ENCODE measurements at regions of chr3 and their contacts with region 1.

Region 1: DNA sequence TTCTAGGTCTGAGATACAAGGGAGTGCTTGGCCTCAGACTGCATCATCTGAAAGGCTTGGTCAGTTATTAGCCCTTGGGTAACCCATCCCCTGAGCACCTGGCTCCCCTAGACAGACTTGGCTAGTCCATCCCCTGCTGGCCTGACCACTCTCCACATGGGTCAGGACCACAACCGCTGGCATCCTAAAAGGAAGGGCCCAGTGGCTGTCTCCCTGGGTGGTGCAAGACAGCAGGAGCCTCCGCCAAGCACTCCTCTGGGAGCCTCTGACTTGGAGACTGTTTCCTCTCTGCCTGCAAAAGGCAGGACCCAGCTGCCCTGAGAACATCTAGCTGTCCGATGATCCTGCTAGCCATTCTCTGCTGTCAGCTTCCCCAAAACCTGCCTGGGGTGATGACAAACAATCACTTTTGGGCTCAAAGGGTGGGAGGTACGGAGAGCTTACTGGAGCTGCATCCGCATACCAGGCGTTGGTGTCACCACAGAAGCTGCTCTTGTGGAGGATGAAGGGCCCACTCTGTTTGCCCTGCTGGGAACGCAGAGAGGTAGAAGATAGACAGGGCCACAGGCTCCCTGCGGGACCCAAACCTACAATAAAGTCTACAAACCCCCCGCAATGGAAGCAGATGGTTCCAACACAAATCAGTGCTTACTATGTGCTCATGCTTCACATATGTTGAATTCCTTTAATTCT is 108.0 kb upstream of the PRR20G start:
- DNase-seq: no peak
- ATAC-seq: peak; percentile 54
- H3K4me3 Mint-ChIP-seq: peak overlapping the region; percentile 6; the same call in 1 of the 2 replicates
- H3K27ac Mint-ChIP-seq: no peak overlapping the region; the same call in 1 of the 2 replicates
- H3K4me1 Mint-ChIP-seq: peaks cover 28% of the 10 kb centered on the region
- H3K27me3 Mint-ChIP-seq: no peaks in the 10 kb centered on the region
- CTCF ChIP-seq: no peak

Region 2: DNA sequence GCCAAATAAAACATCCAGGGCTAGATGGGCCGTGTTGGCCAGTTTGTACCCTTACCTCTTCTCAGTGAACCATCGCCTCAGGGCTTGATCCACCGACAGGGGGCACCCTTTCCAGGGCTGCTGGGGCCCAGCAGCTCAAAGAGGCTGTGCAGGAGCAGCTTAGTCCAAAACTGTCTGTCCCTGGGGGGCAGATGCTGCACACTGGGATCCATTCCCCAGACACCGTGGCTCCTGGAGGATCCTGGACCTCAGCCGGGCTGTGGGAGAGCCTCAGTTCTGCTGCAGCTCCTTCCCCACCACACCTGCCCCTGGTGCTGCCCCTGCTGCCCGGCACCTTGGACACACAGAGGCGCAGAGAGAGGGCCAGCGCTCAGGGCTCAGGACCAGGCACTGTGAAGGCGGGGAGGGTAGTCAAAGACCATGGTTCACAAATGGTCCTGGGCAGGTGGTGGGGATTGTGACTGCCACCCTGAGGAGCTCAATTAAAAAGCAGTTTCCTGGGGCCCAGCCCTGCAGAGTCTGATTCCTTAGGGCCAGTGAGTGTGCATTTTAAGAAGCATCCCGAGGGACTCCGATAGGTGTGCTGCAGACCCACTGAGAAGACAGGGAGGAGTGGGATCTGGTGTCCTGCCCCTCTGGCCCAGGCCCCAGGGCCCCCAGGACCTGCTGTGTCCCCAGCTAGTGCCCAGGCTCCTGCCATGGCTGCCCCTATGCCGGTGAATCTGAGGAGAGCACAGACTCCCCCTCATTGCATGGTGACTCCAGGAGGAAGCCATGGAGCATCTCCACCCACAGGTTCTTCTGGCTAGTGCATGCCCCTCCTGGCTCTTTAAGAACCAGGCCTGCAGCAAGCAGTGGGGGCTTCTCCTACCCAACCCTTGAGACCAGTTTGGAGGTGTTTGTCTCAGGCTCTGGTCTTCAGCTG is 21.5 kb before region 1 on chr3:
- CTCF ChIA-PET with region 1: interaction called, 14 read pairs
- POLR2A ChIA-PET with region 1: no interaction called
- DNase-seq: peak; percentile 79
- ATAC-seq: peak; percentile 77
- H3K4me3 Mint-ChIP-seq: no peak overlapping the region
- H3K27ac Mint-ChIP-seq: no peak overlapping the region
- H3K4me1 Mint-ChIP-seq: peaks cover 5% of the 10 kb centered on the region; the same call in 1 of the 2 replicates
- H3K27me3 Mint-ChIP-seq: no peaks in the 10 kb centered on the region
- CTCF ChIP-seq: peak; percentile 60

Region 3: DNA sequence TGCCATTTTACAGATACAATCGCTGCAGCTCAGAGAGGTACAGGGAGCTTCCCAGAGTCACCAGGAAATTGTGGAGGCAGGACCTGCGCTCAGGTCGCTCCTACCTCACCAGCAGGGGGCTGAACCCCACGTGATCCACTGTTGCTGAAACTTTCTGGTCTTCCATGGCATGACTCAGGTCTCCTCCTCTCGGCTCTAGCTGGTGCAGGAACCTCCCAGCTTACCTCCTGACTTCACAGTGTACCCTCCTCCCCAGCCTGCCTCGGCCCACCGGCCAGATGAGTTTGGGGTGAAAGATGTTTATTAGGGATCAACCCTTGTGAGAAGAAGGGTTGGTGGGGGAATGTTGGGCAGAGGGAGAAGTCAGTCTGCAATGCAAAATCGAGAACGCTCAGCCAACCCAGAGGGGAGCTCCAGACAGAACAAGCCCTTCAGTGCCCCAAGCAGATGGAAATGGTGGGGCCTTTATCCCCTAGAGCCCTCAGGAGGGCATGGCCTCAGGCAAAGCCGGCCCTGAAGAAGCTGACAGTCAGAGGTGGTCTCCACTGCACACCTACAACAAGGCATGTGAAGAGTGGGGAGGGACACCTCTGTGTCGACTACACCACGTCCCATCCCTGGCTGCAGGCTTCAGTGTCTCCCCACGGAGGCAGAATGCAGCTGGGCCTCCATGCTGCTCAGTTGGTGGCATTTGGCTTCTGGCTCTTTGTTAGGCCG is 10.7 kb after region 1 on chr3:
- CTCF ChIA-PET with region 1: interaction called, 12 read pairs
- POLR2A ChIA-PET with region 1: interaction called, 3 read pairs
- DNase-seq: no peak
- ATAC-seq: peak; percentile 71
- H3K4me3 Mint-ChIP-seq: no peak overlapping the region
- H3K27ac Mint-ChIP-seq: no peak overlapping the region
- H3K4me1 Mint-ChIP-seq: peaks cover 27% of the 10 kb centered on the region
- H3K27me3 Mint-ChIP-seq: peaks cover 4% of the 10 kb centered on the region; the same call in 1 of the 2 replicates
- CTCF ChIP-seq: no peak

Region 4: DNA sequence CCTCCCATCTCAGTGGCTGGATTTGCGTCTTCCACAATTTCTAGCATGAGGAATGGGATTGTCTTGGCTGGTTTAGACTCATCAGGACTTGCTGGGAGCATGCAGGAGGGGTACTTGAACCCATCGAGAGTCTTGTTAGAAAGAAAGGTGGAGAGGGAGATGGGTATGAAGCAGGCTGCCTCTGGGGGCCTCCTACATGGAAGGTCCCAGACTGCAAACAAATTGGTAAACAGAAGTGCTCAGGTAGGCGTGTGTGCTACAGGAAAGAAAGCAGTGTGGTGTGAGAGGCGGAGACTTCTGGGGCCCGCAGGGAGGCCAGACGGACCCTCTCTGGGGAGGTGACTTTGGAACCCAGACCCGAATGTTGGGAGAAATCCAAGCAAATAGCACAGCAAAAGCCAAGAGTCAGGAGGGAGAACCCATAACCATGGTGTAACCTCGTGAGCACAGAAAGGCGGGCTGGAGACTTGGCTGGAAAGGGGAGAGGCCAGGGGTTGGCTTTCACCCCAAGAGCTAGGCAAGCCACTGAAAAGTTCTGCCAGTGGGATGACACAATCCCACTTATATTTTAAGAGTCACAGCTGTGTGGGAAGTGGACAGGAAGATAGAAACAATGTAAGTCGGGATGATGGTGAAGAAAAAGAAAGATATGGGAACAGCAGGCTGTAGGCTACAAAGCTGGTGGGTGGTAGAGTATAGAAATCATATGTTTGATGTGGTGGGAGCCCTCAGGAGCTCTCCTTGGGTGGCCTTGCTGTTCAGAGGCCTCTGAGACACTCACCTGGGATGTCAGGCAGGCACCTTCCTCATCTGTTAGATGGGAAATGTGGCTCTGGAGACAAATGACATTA is 22.1 kb after region 1 on chr3:
- CTCF ChIA-PET with region 1: no interaction called
- POLR2A ChIA-PET with region 1: no interaction called
- DNase-seq: no peak
- ATAC-seq: no peak
- H3K4me3 Mint-ChIP-seq: no peak overlapping the region
- H3K27ac Mint-ChIP-seq: no peak overlapping the region
- H3K4me1 Mint-ChIP-seq: peaks cover 22% of the 10 kb centered on the region
- H3K27me3 Mint-ChIP-seq: no peaks in the 10 kb centered on the region
- CTCF ChIP-seq: no peak

Measured in WTC11 (cell line).